Left cardiac atrium (tissue), 4 donors: ENCODE measurements at regions of chr2 and their contacts with region 1.

Region 1: DNA sequence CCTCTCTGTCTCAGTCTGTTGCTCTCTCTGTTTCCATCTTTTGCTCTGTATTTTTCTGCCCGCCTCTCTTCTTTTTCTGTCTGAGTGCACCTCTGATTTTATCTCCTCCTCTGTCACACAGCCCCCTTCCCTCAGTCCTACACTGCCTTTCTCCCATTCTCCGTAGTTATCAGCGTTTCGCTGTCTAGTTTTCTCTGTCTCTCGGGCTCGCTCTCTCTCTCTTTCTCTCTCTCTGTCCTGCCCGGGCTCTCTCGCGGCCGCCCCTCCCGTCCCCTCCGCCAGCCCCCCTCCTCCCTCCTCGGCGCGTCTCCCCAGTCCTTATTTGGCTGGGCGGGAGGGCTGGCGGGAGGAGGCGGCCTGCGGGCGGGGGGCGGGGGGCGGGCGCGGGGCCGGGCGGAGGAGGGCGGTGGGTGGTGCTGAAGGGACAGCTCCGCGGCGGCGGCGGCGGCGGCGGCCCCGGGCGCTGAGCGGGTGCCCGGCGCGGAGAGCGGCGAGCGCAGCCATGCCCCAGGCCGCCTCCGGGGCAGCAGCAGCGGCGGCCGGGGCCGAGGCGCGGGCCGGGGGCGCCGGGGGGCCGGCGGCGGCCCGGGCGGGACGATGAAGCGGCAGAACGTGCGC is at the start of gene KCNK3:
- DNase-seq: peak; percentile 72
- ATAC-seq: peak; percentile 67 to 75
- total RNA-seq, gene KCNK3: 30.9 to 35.4 TPM

Region 2: DNA sequence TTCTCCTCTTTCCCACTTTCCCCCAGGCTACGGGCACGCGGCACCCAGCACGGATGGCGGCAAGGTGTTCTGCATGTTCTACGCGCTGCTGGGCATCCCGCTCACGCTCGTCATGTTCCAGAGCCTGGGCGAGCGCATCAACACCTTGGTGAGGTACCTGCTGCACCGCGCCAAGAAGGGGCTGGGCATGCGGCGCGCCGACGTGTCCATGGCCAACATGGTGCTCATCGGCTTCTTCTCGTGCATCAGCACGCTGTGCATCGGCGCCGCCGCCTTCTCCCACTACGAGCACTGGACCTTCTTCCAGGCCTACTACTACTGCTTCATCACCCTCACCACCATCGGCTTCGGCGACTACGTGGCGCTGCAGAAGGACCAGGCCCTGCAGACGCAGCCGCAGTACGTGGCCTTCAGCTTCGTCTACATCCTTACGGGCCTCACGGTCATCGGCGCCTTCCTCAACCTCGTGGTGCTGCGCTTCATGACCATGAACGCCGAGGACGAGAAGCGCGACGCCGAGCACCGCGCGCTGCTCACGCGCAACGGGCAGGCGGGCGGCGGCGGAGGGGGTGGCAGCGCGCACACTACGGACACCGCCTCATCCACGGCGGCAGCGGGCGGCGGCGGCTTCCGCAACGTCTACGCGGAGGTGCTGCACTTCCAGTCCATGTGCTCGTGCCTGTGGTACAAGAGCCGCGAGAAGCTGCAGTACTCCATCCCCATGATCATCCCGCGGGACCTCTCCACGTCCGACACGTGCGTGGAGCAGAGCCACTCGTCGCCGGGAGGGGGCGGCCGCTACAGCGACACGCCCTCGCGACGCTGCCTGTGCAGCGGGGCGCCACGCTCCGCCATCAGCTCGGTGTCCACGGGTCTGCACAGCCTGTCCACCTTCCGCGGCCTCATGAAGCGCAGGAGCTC is 35.5 kb after region 1 on chr2:
- intact Hi-C with region 1: loop called (anchors 5 kb)
- DNase-seq: no peak
- ATAC-seq: no peak